Activated CD4-positive, alpha-beta T cell treated with anti-CD3 and anti-CD28 coated beads for 36 hours (primary cell): ENCODE measurements at regions of chr18 and their contacts with region 1.

Region 1: DNA sequence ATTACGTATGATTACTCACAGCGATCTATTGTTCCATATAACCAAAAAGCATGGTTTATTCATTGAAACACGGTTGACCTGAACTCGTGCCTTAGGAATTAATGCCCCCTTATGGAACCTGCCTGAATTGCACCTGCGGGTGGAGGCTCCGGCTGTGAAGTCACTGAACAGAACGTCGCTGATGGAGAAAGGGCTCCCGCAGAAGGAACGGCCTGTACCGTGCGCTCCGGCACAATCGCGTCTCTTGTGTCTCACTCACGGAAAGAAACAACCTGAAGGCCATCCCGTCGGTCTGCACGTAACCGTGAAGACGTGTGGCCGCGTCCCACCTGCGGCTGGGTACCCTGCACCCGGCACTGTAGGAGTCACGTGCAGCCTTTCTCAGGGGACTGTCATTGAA is 133.1 kb downstream of the NFATC1 start:
- DNase-seq: peak; percentile 85
- ATAC-seq: peak; percentile 10
- H3K4me3 Mint-ChIP-seq: no peak overlapping the region
- H3K27ac Mint-ChIP-seq: no peak overlapping the region
- H3K4me1 Mint-ChIP-seq: peaks cover 44% of the 10 kb centered on the region
- H3K27me3 Mint-ChIP-seq: no peaks in the 10 kb centered on the region

Region 2: GRCh38 chr18:79378542-79379250 is 150.2 kb before region 1 on chr18:
- CTCF ChIA-PET with region 1: interaction called, 23 read pairs
- POLR2A ChIA-PET with region 1: no interaction called
- intact Hi-C with region 1: loop called (anchors 1 kb)
- DNase-seq: peak; percentile 92
- ATAC-seq: peak; percentile 93
- H3K4me3 Mint-ChIP-seq: no peak overlapping the region
- H3K27ac Mint-ChIP-seq: peak overlapping the region; percentile 58
- H3K4me1 Mint-ChIP-seq: peaks cover 10% of the 10 kb centered on the region
- H3K27me3 Mint-ChIP-seq: no peaks in the 10 kb centered on the region

Region 3: GRCh38 chr18:79496978-79497637 is 31.7 kb before region 1 on chr18:
- CTCF ChIA-PET with region 1: interaction called, 7 read pairs
- POLR2A ChIA-PET with region 1: interaction called, 3 read pairs
- intact Hi-C with region 1: loop called in 1 of 2 experiments (anchors 5 kb)
- DNase-seq: no peak
- ATAC-seq: no peak
- H3K4me3 Mint-ChIP-seq: no peak overlapping the region
- H3K27ac Mint-ChIP-seq: no peak overlapping the region
- H3K4me1 Mint-ChIP-seq: peaks cover 26% of the 10 kb centered on the region
- H3K27me3 Mint-ChIP-seq: no peaks in the 10 kb centered on the region

Region 4: DNA sequence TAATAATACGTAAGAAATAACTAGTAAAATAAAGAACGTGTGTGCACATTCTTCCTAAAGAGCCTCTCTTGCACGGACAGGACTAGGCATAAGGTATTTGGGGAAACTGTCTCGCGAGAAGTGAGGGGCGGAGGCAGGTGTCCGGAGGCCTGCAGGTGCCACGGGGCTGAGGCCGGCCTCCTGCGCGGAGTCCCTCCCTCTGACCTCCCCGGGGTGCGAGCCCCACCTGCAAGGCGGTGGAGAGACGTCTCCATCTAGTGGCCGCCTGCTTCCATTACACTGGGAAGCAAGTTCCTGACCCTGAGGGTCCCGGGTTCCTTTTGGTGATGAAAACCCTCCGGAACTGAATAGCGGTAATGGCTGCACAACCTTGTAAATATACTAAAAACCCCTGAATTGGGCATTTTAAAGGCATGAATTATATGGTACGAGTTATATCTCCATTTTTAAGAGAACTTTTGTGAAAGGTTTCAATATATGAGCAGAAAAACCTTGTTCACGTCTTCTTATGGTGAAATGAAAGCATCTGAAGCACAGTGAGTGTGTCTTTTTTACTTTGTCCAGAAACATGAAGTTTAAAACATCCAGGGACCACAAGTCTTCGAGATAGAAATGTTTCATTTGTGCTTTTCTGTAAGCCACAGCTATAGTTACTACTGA is 115.3 kb after region 1 on chr18:
- CTCF ChIA-PET with region 1: interaction called, 7 read pairs
- POLR2A ChIA-PET with region 1: no interaction called
- intact Hi-C with region 1: loop called (anchors 1 to 5 kb)
- DNase-seq: peak; percentile 86
- ATAC-seq: peak; percentile 90
- H3K4me3 Mint-ChIP-seq: no peak overlapping the region
- H3K27ac Mint-ChIP-seq: no peak overlapping the region
- H3K4me1 Mint-ChIP-seq: peaks cover 6% of the 10 kb centered on the region
- H3K27me3 Mint-ChIP-seq: peaks cover 9% of the 10 kb centered on the region